Vagina (tissue), 2 donors: ENCODE measurements at regions of chr13 and their contacts with region 1.

Region 1: GRCh38 chr13:94549232-94550061 is 46.5 kb downstream of the TGDS start:
- DNase-seq: peak in 1 of 2 donors; percentile 99
- H3K4me3 ChIP-seq: peak overlapping the region; percentile 60 to 82
- H3K27ac ChIP-seq: peak overlapping the region; percentile 91
- H3K4me1 ChIP-seq: peaks cover 9% of the 10 kb centered on the region
- H3K27me3 ChIP-seq: no peaks in the 10 kb centered on the region
- CTCF ChIP-seq: peak in 1 of 3 experiments; percentile 30
- POLR2A ChIP-seq: peak in 1 of 2 donors; percentile 30

Region 2: GRCh38 chr13:92640936-92641335 is 1908.5 kb before region 1 on chr13:
- intact Hi-C with region 1: no loop called
- DNase-seq: no peak
- H3K4me3 ChIP-seq: no peak overlapping the region
- H3K27ac ChIP-seq: no peak overlapping the region
- H3K4me1 ChIP-seq: no peaks in the 10 kb centered on the region
- H3K27me3 ChIP-seq: no peaks in the 10 kb centered on the region
- CTCF ChIP-seq: no peak
- POLR2A ChIP-seq: no peak

Region 3: DNA sequence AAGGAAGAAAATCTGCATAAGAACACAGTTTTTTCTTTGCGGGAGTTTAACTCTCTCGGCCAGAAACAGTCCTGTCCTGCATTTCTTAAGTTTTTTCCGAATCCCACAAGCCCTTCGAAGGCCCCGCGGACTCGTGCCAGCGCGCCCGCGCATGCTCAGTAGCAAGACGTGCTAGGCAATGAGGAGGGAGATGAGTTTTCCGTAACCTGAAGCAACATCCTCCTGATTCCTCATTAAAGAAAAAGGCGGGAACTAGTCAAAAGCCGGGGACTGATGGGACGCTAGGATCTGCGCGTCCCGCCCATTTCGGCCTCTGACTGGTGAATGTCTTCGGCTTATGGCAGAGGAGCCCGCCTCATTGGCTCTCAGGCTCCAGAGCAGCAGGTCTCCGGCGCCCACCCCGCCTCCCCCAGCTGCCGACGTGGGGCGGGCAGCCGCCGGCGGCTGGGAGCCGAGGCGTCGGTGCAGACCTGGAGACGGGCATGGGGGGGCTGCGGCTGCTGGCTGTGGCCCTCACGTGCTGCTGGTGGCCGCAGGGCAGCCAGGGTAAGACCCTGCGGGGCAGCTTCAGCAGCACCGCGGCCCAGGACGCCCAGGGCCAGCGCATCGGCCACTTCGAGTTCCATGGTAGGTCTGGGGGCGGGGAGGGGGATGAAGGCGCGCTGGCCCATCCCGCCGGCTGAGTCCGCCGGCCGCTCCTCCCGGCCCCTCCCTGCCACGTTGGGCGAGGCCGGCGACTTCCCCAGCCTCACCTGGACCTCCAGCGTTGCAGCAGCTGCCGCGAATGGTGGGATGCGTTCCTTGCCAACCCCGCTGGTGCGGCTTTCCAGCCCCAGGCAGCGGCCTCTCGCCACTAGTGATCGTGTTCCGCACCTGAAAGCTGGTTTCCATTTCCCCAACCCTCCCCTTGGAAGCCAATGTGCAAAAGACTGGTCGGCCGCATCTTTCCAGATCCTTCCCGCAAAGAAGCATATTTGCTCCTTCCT is 52.3 kb after region 1 on chr13 and contains the start of gene GPR180:
- intact Hi-C with region 1: loop called (anchors 10 kb)
- DNase-seq: peak in 1 of 2 donors; percentile 99
- H3K4me3 ChIP-seq: peak within 1 kb of the TSS; percentile 72 to 98
- H3K27ac ChIP-seq: peak within 1 kb of the TSS; percentile 89
- H3K4me1 ChIP-seq: no peaks in the 10 kb centered on the region
- H3K27me3 ChIP-seq: no peaks in the 10 kb centered on the region
- CTCF ChIP-seq: no peak
- POLR2A ChIP-seq: peak in 1 of 2 donors; percentile 72
- total RNA-seq, gene GPR180: 5.6 TPM